GM13976 (cell line): ENCODE measurements at regions of chr6 and their contacts with region 1.

Region 1: DNA sequence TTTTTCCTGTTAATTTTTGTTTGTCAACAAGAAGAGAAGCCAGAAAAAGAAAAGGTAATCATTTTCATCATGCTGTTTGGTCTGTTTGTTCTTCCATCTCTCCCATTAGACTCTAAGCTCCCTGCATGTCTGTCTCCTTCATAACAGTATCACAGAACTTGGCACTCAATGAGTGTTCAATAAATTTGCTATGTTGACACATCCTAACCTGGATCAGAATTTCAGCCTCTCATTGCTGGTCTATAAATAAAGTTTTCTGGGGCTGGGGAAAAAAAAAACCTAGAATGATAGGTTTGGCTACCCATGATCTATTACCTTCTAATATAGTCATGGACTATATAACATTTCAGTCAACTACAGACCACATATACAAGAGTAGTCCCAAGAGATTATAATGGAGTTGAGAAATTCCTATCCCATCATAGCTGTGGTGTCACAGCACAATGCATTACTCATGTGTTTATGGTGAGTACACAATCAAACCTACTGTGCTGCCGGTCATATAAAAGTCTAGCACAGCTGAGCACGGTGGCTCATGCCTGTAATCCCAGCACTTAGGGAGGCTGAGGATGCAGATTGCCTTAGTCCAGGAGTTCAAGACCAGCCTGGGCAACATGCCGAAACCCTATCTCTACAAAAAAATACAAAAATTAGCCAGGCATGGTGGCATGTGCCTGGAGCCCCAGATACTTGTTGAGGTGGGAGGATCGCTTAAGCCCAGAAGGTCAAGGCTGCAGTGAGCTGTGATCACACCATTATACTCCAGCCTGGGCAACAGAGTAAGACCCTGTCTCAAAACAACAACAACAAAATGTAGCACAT is 5.9 kb downstream of the NUDT3 start:
- DNase-seq: no peak
- CTCF ChIP-seq: no peak

Region 2: DNA sequence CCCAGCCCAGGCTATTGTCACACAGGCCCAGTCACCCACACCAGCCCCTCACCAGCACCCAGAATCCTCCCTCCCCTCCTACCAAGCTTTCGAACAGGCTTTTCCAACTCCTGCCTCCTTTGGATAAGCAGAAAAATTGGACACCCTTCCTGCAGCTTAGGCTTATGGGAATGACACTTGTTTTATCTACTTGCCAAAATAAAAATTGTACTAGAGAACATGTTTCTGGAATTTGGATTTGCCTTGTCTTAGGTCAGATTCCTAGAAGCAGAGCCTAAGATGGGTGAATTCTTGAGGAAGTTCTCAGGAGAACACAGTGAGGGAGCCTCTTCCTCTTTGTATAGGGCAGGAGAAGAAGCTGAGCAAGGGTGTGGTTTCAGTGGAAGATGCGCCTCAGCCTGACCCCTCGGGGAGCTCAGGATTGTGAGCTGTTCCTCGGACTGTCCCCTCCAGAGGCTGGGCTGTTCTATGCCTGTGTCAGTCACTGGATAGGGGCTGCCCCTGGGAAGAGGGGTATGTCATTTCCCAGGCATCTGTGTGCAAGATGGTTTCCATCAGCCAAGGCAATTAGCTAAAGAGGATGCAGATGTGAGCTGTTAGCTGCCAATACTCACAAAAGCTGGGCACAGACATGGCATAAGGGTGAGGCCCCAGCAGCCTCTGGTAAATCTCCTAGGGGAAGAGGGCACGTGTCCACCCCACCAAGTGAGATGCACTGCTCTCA is 731.5 kb before region 1 on chr6:
- in situ Hi-C with region 1: no loop called
- DNase-seq: no peak
- CTCF ChIP-seq: no peak

Region 3: DNA sequence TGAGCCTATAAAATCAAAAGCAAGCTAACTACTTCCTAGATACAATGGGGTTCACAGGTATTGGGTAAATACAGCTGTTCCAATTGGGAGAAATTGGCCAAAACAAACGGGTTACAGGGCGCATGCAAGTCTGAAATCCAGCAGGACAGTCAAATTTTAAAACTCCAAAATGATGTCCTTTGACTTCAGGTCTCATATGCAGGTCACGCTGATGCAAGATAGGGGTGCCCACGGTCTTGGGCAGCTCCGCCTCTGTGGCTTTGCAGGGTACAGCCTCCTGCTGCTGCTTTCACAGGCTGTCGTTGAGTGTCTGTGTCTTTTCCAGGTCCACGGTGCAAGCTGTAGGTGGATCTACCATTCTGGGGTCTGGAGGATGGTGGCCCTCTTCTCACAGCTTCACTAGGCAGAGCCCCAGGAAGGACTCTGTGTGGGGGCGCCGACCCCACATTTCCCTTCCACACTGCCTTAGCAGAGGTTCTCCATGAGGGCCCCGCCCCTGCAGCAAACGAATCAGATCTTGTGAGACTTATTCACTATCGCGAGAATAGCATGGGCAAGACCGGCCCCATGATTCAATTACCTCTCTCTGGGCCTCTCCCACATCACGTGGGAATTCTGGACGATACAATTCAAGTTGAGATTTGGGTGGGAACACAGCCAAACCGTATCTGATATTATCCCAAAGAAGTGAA is 125.8 kb before region 1 on chr6:
- in situ Hi-C with region 1: loop called (anchors 10 kb)
- DNase-seq: no peak
- CTCF ChIP-seq: no peak

Region 4: DNA sequence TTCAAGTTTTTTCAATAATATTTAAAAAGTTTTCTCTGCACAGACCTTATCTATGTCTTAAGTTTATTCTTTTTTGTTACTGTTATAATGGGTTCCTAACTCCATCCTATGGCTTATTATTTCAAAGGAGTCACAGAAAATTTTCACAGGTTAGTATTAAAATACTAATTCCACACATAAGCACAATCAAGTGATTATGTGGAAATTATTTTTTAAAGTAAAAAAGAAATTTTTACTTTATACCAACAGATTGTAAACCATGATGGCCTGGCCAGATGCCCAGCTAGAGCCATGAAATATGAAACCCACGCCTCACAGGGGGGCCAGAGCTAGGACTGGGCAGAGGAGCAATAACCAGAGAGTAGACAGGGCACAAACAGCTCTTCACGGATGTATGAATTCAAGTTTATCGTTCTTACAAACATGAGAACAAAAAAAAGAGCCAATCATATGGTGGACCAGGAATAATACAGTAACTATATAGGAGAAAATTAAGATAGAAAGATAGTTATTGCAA is 28.1 kb before region 1 on chr6:
- in situ Hi-C with region 1: no loop called
- DNase-seq: no peak
- CTCF ChIP-seq: no peak

Region 5: GRCh38 chr6:34491091-34491430 is 104.5 kb after region 1 on chr6:
- in situ Hi-C with region 1: no loop called
- DNase-seq: no peak
- CTCF ChIP-seq: no peak